ENCODE measurements at regions of chr18 and their contacts with region 1.

Region 1: GRCh38 chr18:67359873-67360838 is 156.4 kb downstream of the DSEL start:
- DNase-seq: no peak
- H3K4me3 Mint-ChIP-seq: no peak overlapping the region
- H3K27ac Mint-ChIP-seq: no peak overlapping the region
- H3K4me1 Mint-ChIP-seq: peaks cover 13% of the 10 kb centered on the region
- H3K27me3 Mint-ChIP-seq: no peaks in the 10 kb centered on the region

Region 2: DNA sequence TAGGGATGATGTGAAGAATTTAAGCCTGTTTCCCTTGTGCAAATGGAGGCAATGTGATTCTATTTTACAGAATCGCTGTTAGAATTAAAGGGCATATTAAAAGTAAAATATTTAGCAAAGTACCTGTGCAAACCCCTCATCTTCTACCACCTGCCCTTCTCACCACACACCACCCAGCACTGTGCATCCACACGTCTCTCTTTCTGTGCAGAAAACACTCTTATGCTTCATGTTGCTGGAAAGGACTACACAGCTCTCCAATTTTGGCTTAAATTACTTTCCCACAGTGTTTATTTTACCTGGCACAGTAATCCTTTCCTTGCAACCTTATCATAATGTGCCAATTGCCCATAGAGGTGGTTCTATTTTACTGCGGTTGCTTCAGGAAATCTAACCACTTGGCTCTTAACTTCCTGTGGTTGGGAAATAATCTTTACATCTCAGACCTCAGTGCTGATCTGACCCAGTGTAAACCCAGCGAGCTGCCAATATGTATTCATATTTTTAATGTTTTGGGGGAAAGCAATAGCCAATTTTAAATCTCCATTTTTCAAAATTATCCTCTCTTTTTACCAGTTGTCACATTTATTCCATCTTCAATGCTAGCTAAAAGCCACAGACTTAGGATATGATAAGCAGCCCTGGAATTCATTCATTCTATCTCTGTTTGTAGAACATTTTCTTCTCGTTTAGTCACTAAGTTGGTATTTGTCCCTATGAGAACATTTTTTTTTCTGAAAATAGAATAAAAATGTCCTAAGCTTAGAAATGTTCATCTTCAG is 94.5 kb before region 1 on chr18:
- intact Hi-C with region 1: loop called (anchors 10 kb)
- DNase-seq: no peak
- H3K4me3 Mint-ChIP-seq: peak overlapping the region; percentile 23
- H3K27ac Mint-ChIP-seq: no peak overlapping the region
- H3K4me1 Mint-ChIP-seq: peaks cover 42% of the 10 kb centered on the region
- H3K27me3 Mint-ChIP-seq: peaks cover 13% of the 10 kb centered on the region

Region 3: GRCh38 chr18:67417864-67418523 is 57.8 kb after region 1 on chr18:
- intact Hi-C with region 1: loop called (anchors 5 kb)
- DNase-seq: peak; percentile 8
- H3K4me3 Mint-ChIP-seq: peak overlapping the region; percentile 4
- H3K27ac Mint-ChIP-seq: peak overlapping the region; percentile 0
- H3K4me1 Mint-ChIP-seq: peaks cover 4% of the 10 kb centered on the region
- H3K27me3 Mint-ChIP-seq: peaks cover 1% of the 10 kb centered on the region

Measured in activated T-helper 2 cell treated with anti-CD3 and anti-CD28 coated beads, Interferon-gamma antibody, Interleukin-2, Interleukin-4, amounts not matched to agents 10 μg/mL and 5 μg/mL and 100 μg/mL, durations not matched to agents 14 hours and 24 hours and 36 hours (primary cell).